Pancreas (tissue), 10 donors: ENCODE measurements at regions of chr10 and their contacts with region 1.

Region 1: GRCh38 chr10:13439313-13440184 is 89.3 kb downstream of the BEND7 start:
- DNase-seq: peak in 4 of 6 donors; percentile 18 to 75 (median 54)
- ATAC-seq: peak; percentile 39 to 65 (median 58)
- H3K4me3 ChIP-seq: peak overlapping the region in 2 of 4 donors; percentile 38 to 47
- H3K27ac ChIP-seq: no peak overlapping the region
- H3K4me1 ChIP-seq: peaks cover 0 to 9% (median 6%) of the 10 kb centered on the region in 3 donors
- H3K27me3 ChIP-seq: no peaks in the 10 kb centered on the region
- CTCF ChIP-seq: no peak

Region 2: DNA sequence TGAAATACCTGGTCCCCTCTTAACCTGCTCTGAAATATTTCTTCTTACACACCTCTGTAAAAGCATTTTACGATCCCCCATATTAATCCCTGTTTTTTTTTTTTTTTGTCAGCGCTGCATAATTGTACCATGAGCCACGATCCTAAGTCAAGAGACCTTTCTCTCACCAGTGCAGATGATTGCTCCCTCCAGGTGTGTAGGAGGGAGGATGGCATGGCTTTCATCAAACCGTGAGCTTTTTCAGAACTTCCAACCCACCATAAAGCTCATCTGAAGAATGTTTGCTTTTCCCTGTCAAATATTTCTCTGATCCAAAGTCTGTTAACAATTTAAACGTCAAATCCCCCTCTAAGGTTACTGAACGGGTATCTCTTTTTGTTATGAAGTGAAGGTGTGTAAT is 63.3 kb before region 1 on chr10:
- intact Hi-C with region 1: loop called in 2 of 3 experiments (anchors 5 to 10 kb)
- DNase-seq: no peak
- ATAC-seq: no peak
- H3K4me3 ChIP-seq: no peak overlapping the region
- H3K27ac ChIP-seq: no peak overlapping the region
- H3K4me1 ChIP-seq: no peaks in the 10 kb centered on the region
- H3K27me3 ChIP-seq: no peaks in the 10 kb centered on the region
- CTCF ChIP-seq: no peak

Region 3: GRCh38 chr10:13382703-13383398 is 56.7 kb before region 1 on chr10:
- intact Hi-C with region 1: loop called in 2 of 3 experiments (anchors 5 to 10 kb)
- DNase-seq: peak in 4 of 6 donors; percentile 21 to 56 (median 42)
- ATAC-seq: peak; percentile 73 to 90 (median 83)
- H3K4me3 ChIP-seq: peak overlapping the region; percentile 16 to 42 (median 30)
- H3K27ac ChIP-seq: peak overlapping the region in 3 of 4 donors; percentile 22 to 64 (median 53)
- H3K4me1 ChIP-seq: peaks cover 0 to 4% (median 0%) of the 10 kb centered on the region in 3 donors
- H3K27me3 ChIP-seq: no peaks in the 10 kb centered on the region
- CTCF ChIP-seq: no peak